Testis (tissue), 5 donors: ENCODE measurements at regions of chr14 and their contacts with region 1.

Region 1: GRCh38 chr14:32252030-32252670 is 49.1 kb upstream of the RNU6-8 start:
- DNase-seq: peak; percentile 76
- H3K4me3 ChIP-seq: no peak overlapping the region
- H3K27ac ChIP-seq: no peak overlapping the region
- H3K4me1 ChIP-seq: peaks cover 11% of the 10 kb centered on the region
- H3K27me3 ChIP-seq: no peaks in the 10 kb centered on the region
- CTCF ChIP-seq: peak; percentile 71 to 74 (median 71)
- POLR2A ChIP-seq: no peak

Region 2: DNA sequence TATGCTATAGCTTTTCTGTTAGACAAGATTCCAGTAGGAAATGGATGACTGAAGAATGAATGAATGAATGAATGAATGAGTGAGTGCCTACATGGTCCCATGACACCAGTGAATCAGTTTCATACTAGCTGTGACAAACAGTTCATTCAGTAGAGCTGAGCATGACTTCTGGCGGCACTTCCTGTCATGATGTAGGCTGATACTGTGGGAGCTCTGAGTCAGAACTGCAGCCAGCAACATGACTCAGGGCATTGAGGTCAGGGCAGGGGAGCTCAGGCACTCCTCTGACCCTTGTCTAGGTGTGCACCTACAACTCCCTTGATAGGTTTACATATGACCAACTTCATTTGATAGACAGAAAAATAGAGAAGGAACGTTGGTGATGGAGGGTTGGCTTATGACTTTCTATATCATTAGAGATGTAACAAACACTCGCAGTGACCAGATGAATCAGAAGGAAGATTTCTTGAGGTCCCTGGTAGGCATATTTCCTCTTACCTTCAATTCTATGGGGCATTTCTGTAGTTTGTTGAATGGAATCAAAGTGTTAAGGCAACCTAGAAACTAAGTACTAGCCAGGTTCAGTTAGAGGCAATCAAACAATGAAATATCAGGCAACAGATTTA is 314.3 kb before region 1 on chr14:
- intact Hi-C with region 1: loop called (anchors 10 kb)
- DNase-seq: no peak
- H3K4me3 ChIP-seq: no peak overlapping the region
- H3K27ac ChIP-seq: no peak overlapping the region
- H3K4me1 ChIP-seq: peaks cover 9% of the 10 kb centered on the region
- H3K27me3 ChIP-seq: no peaks in the 10 kb centered on the region
- CTCF ChIP-seq: no peak
- POLR2A ChIP-seq: no peak

Region 3: GRCh38 chr14:32469388-32470160 is 217.4 kb after region 1 on chr14:
- intact Hi-C with region 1: loop called (anchors 10 kb)
- DNase-seq: no peak
- H3K4me3 ChIP-seq: no peak overlapping the region
- H3K27ac ChIP-seq: no peak overlapping the region
- H3K4me1 ChIP-seq: peaks cover 20% of the 10 kb centered on the region
- H3K27me3 ChIP-seq: no peaks in the 10 kb centered on the region
- CTCF ChIP-seq: peak in 2 of 3 experiments; percentile 21 to 47
- POLR2A ChIP-seq: no peak